Heart right ventricle (tissue), 16 donors: ENCODE measurements at regions of chr2 and their contacts with region 1.

Region 1: DNA sequence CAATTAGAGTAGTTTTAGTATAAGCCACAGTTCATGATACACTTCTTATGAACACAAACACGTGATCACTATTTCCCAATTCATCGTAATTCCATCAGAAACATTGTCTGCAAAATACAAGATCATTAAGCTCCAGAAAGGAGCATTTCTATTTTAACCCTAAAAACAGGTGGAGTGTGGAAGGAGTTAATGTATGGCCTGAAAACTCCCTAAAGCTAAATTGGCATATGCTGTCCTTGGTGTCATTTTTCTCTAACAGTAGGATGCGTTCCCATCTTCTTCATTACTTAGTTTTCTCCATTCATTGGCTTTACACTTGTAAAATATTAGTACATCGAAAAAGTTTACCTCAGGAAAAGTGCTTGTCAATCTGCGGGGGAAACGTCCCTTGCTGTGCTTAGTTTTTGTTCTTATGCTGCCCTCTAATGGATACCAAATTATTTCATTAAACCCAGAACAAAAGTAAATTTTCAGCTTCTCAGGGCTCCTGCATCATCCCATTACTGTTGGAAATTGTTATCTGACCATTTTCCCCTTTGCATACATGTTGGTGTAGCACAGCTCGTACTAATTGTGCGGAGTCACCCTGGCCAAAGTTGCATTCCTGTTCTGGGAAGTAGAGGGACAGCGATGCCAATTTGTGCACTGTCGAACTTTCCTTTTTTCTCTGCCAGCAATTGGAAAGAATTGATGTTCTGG is 153.4 kb downstream of the GPD2 start:
- DNase-seq: peak in 1 of 2 donors; percentile 7
- ATAC-seq: peak in 7 of 8 donors; percentile 30 to 77 (median 53)
- H3K4me3 ChIP-seq: no peak overlapping the region
- H3K27ac ChIP-seq: no peak overlapping the region
- H3K4me1 ChIP-seq: peaks cover 0 to 3% (median 0%) of the 10 kb centered on the region in 9 donors
- H3K27me3 ChIP-seq: no peaks in the 10 kb centered on the region
- CTCF ChIP-seq: peak in 8 of 9 donors; percentile 27 to 76 (median 66)

Region 2: DNA sequence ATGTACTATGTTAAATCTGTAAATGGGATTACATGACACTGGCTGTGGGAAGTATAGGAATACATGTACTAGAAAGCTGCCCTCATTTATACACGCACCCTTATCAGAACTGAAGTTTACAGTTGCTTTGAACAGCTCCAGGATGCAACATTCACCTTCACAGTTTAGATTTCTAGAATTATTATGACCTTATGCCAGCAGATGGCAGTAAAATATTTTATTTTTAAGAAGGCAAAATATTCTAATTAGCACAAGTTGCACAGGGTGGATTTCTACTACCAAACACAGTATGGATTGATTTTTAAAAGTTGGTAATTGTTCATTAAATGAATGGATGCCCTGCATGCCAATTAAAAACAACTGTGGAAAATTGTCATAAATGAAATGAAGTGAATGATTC is 1220.6 kb before region 1 on chr2:
- intact Hi-C with region 1: loop called in 3 of 10 experiments (anchors 10 kb)
- DNase-seq: no peak
- ATAC-seq: no peak
- H3K4me3 ChIP-seq: no peak overlapping the region
- H3K27ac ChIP-seq: no peak overlapping the region
- H3K4me1 ChIP-seq: no peaks in the 10 kb centered on the region
- H3K27me3 ChIP-seq: no peaks in the 10 kb centered on the region
- CTCF ChIP-seq: peak in 5 of 9 donors; percentile 8 to 39 (median 20)

Region 3: GRCh38 chr2:156192468-156192867 is 397.1 kb before region 1 on chr2:
- intact Hi-C with region 1: loop called in 6 of 10 experiments (anchors 10 kb)
- DNase-seq: no peak
- ATAC-seq: no peak
- H3K4me3 ChIP-seq: no peak overlapping the region
- H3K27ac ChIP-seq: no peak overlapping the region
- H3K4me1 ChIP-seq: no peaks in the 10 kb centered on the region
- H3K27me3 ChIP-seq: no peaks in the 10 kb centered on the region
- CTCF ChIP-seq: peak in 7 of 9 donors; percentile 25 to 54 (median 37)

Region 4: GRCh38 chr2:156332534-156333273 is 256.8 kb before region 1 on chr2 and contains the start of gene NR4A2:
- intact Hi-C with region 1: loop called in 7 of 10 experiments (anchors 2 to 10 kb)
- DNase-seq: peak; percentile 87 to 91
- ATAC-seq: peak; percentile 65 to 85 (median 77)
- H3K4me3 ChIP-seq: peak within 1 kb of the TSS; percentile 62 to 91 (median 80)
- H3K27ac ChIP-seq: peak within 1 kb of the TSS; percentile 97 to 100 (median 99)
- H3K4me1 ChIP-seq: peaks cover 0 to 46% (median 13%) of the 10 kb centered on the region in 9 donors
- H3K27me3 ChIP-seq: peaks cover 0 to 37% (median 19%) of the 10 kb centered on the region in 7 donors
- CTCF ChIP-seq: no peak
- total RNA-seq, gene NR4A2: 1.2 to 31.2 (median 5.3) TPM

Region 5: DNA sequence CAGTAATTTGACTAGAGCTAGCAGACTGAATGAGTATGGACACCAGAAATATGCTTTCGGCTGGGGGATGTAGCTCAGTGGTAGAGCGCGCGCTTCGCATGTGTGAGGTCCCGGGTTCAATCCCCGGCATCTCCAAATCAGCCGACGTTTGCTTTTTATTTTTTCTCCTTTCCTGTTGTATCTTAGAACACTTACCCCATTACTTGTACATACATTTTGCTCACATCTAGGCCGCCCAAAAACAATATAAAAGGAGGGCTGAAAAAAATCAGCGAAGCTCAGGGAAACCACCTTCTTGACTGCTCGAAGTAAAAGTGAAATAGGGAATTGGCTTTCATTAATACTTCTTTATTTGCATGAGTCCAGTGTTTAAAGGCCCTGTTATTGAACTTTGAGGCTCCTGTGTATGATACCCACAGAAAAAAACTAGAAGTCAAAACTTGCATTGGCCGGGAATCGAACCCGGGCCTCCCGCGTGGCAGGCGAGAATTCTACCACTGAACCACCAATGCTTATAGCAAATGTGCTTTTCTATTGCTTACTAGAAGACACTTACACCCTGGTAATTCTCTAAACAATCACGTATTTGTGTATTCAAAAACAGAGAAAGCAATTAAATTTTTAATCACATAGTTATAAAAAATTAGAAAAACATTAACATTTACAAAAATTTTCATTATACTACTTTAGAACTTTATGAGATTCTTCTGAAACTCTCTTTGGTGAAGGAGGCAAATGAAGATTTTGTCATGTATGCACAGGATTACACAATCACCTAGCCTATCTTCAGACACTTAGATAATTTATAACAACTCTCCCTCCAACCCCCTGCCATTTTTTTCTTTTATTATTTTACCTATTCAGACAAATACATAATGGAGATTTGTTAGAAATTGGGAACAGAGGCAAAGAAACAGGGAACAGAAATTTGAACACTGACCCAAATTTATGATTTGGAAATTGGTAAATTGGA is 188.5 kb before region 1 on chr2:
- intact Hi-C with region 1: loop called in 3 of 10 experiments (anchors 5 to 10 kb)
- DNase-seq: peak; percentile 59 to 79
- ATAC-seq: peak; percentile 90 to 97 (median 92)
- H3K4me3 ChIP-seq: peak overlapping the region; percentile 51 to 85 (median 75)
- H3K27ac ChIP-seq: peak overlapping the region; percentile 52 to 97 (median 89)
- H3K4me1 ChIP-seq: peaks cover 0 to 26% (median 7%) of the 10 kb centered on the region in 9 donors
- H3K27me3 ChIP-seq: peaks cover 0 to 3% (median 0%) of the 10 kb centered on the region in 7 donors
- CTCF ChIP-seq: no peak

Region 6: GRCh38 chr2:156625360-156626170 is 36.0 kb after region 1 on chr2:
- intact Hi-C with region 1: no loop called
- DNase-seq: peak in 1 of 2 donors; percentile 53
- ATAC-seq: peak; percentile 62 to 92 (median 86)
- H3K4me3 ChIP-seq: no peak overlapping the region
- H3K27ac ChIP-seq: peak overlapping the region in 5 of 10 donors; percentile 31 to 57 (median 53)
- H3K4me1 ChIP-seq: no peaks in the 10 kb centered on the region
- H3K27me3 ChIP-seq: no peaks in the 10 kb centered on the region
- CTCF ChIP-seq: no peak